ENCODE measurements at regions of chr5 and their contacts with region 1.

Region 1: DNA sequence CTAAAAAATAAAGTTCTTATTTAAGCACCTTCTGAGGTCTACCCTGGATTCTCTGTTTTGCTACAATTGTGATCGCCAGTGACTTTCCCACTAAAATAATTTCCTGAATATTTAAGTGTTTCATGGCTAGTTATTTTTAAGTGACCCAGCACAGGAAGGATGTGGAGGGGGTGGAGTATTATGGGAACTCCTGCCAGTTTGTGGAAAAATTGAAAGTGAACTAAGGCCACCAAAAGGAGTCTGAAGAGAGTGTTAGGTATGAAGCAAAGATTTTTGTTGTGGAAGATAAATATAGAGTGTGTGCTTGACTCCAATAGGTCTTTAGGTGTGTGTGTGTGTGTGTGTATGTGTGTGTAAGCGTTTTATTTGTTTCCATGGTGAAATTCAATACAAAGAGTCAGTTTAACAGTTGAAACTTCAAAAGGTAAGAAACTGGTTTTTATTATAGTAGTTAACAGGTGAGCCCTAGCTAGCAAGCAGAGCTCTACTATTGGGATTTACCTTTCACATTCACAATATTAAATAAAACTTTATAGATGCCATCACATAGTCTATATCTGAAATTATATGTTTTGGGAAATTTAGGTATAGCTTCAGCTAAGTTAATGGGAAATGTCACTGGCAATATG is 25.6 kb downstream of the RASGRF2 start:
- DNase-seq: no peak
- H3K4me3 Mint-ChIP-seq: peak overlapping the region; percentile 11
- H3K27ac Mint-ChIP-seq: peak overlapping the region; percentile 62
- H3K4me1 Mint-ChIP-seq: peaks cover 69% of the 10 kb centered on the region
- H3K27me3 Mint-ChIP-seq: no peaks in the 10 kb centered on the region

Region 2: GRCh38 chr5:80975065-80975464 is 10.6 kb before region 1 on chr5:
- CTCF ChIA-PET with region 1: interaction called, 10 read pairs
- intact Hi-C with region 1: no loop called
- DNase-seq: no peak
- H3K4me3 Mint-ChIP-seq: no peak overlapping the region
- H3K27ac Mint-ChIP-seq: no peak overlapping the region
- H3K4me1 Mint-ChIP-seq: peaks cover 74% of the 10 kb centered on the region
- H3K27me3 Mint-ChIP-seq: no peaks in the 10 kb centered on the region

Measured in activated naive CD4-positive, alpha-beta T cell treated with anti-CD3 and anti-CD28 coated beads for 36 hours (primary cell).